Right ventricle myocardium inferior (tissue), 1 donor: ENCODE measurements at regions of chr14 and their contacts with region 1.

Region 1: DNA sequence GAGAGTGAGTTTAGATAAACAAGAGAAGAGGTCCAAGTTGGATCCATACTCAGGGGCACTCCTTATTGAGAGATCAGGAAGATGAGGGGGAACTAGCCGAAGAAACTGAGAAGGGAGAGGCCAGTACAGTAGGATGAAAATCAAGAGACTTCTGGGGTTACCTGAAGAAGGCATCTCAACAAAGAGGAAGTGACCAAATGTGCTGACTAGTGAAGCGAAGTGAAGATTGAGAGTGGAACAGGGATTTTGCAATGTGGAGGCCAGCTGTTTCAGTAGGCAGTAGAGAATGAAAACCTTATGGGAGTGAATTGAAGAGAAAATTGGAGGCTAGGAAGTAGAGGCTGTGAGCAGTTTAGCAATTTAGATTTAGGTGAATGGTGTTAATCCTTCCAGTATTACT is 153.0 kb downstream of the SYNE2 start:
- DNase-seq: no peak
- ATAC-seq: no peak

Region 2: DNA sequence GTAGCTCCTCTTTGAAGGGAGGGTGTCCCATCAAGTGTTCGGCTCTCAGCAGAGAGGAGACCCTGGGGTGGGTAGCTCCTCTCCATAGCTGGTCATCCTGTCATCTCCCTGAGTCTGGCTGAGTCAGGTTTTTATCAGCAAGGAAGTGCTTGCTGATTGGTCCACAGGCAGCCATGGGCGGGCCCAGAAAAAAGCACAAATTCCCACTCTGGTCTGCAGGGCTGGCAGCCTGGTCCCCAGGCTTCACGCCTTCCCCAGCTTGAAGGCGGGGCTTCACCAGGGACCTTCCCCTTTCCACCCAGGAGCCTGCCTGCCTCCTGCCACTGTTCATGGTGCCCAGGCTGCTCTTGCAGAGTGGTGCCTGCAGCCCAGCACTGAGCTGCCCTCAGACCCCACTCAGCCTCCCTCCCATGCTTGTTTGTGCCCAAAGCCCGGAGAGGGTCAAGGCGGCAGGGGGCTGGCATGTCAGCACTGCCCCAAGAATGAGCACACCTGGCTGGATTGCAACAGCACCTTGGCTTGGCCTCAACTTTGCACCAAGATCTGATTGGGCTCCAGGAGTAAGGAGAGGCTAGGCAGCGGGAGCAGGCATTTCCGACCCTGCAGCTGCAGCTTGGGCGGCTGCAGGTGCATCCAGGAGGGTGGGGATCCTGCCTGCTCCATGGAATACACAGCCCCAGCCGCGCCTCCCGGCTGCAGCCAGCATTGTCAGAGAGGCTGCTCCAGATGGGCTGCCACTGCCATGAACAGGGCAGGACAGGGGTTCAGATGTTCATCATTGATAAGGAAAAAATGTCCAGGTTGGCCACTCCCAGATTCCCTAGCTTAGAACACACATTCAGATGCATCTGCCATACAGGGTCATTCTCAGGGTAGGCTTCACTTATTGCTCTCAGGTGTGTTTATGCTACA is 342.1 kb before region 1 on chr14:
- intact Hi-C with region 1: no loop called
- DNase-seq: no peak
- ATAC-seq: no peak

Region 3: GRCh38 chr14:64147126-64147790 is 141.4 kb after region 1 on chr14:
- intact Hi-C with region 1: loop called (anchors 10 kb)
- DNase-seq: no peak
- ATAC-seq: no peak